Calu3 (cell line): ENCODE measurements at regions of chr9 and their contacts with region 1.

Region 1: DNA sequence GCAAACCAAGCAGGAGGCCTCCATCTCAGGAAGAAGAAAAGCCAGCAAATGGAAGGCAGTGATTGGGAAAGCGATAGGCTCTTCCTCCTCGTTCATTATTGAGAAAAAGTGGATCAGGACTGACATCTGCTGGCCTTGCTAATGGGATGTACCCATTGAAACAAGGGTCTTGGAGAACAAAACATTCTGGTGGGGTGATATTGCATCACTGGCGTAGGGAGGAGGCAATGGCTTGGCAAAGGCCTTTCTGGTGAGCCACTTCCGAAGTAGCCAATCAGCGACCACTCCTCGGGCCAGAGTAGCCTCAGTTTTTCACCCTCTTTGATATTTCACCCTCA is 86.7 kb upstream of the NFIB start:
- DNase-seq: peak; percentile 24
- H3K4me3 Mint-ChIP-seq: no peak overlapping the region
- H3K27ac Mint-ChIP-seq: no peak overlapping the region
- H3K4me1 Mint-ChIP-seq: no peaks in the 10 kb centered on the region
- H3K27me3 Mint-ChIP-seq: no peaks in the 10 kb centered on the region
- CTCF ChIP-seq: no peak

Region 2: GRCh38 chr9:13351778-13352386 is 1048.7 kb before region 1 on chr9:
- CTCF ChIA-PET with region 1: no interaction called
- intact Hi-C with region 1: loop called (anchors 10 kb)
- DNase-seq: no peak
- H3K4me3 Mint-ChIP-seq: no peak overlapping the region
- H3K27ac Mint-ChIP-seq: no peak overlapping the region
- H3K4me1 Mint-ChIP-seq: no peaks in the 10 kb centered on the region
- H3K27me3 Mint-ChIP-seq: no peaks in the 10 kb centered on the region
- CTCF ChIP-seq: peak; percentile 32

Region 3: DNA sequence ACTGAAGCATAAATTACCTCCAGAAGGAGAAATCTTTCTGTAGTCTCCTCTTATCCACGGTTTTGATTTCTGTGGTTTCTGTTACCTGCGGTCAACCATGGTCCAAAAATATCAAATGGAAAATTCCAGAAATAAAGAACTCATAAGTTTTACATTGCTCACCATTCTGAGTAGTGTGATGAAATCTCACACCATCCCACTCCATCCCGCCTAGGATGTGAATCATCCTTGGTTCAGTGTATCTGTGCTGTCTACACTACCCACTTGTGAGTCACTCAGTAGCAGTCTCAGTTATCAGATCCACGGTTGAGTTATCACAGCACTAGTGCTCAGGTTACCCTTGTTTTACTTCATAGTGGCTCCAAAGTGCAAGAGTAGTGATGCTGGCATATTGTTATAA is 457.9 kb before region 1 on chr9:
- CTCF ChIA-PET with region 1: no interaction called
- intact Hi-C with region 1: no loop called
- DNase-seq: no peak
- H3K4me3 Mint-ChIP-seq: no peak overlapping the region
- H3K27ac Mint-ChIP-seq: no peak overlapping the region
- H3K4me1 Mint-ChIP-seq: no peaks in the 10 kb centered on the region
- H3K27me3 Mint-ChIP-seq: no peaks in the 10 kb centered on the region
- CTCF ChIP-seq: no peak

Region 4: DNA sequence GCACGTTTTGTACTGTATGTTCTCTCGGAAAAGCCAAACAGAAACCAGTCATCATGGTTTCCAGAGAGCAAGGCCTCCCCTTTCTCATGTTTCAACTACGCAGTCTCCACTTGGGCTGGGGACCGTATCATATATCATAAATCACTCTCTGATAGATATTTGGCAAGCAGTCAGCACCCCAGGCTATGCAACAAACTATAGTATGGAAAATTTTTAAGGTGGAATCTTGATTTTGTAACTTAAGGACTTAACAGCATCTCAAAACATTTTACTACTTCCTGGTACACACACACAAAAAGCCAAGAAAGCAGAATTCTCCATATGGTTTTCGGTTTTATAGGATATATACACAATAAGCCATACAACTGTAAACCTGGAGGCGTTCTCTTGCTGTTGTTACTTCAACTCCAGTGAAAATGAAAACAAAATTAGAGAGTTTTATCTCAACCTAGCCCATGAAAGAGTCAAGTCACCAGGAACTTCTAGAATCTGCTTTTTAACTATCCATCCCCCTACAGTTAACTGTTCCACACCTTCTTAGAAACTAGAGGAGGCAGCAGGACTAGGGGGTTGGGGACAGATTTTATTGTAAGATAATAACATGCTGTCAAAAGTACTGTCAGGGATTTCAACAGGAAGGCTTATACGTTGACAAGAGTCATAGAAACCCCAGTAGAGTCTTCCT is 370.1 kb before region 1 on chr9:
- CTCF ChIA-PET with region 1: no interaction called
- intact Hi-C with region 1: no loop called
- DNase-seq: peak; percentile 42
- H3K4me3 Mint-ChIP-seq: peak overlapping the region; percentile 17
- H3K27ac Mint-ChIP-seq: no peak overlapping the region
- H3K4me1 Mint-ChIP-seq: peaks cover 12% of the 10 kb centered on the region
- H3K27me3 Mint-ChIP-seq: no peaks in the 10 kb centered on the region
- CTCF ChIP-seq: no peak

Region 5: DNA sequence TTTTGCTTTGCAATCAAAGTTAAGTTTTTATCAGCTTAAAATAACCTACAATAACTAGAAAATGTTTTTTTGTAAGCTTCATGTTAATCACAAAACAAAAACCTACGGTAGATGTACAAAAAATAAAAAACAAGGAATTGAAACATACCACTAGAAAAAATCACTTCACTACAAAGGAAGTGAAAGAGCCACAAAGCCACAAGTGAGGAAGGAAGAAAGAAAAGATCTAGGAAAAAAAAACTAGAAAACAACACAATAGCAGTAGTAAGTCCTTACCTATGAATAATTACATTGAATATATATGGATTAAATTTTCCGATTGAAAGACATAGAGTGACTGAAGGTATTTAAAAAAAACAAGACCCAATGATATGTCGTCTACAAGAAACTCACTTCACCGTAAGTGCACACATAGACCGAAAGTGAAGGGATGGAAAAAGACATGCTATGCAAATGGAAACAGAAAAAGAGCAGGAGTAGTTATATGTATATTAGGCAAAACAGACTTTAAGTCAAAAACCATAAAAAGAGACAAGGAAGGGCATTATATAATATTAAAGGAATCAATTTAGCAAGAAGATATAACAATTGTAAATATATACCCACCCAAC is 306.0 kb after region 1 on chr9:
- CTCF ChIA-PET with region 1: no interaction called
- intact Hi-C with region 1: no loop called
- DNase-seq: no peak
- H3K4me3 Mint-ChIP-seq: no peak overlapping the region
- H3K27ac Mint-ChIP-seq: no peak overlapping the region
- H3K4me1 Mint-ChIP-seq: no peaks in the 10 kb centered on the region
- H3K27me3 Mint-ChIP-seq: no peaks in the 10 kb centered on the region
- CTCF ChIP-seq: no peak